Motor neuron (in vitro differentiated cells): ENCODE measurements at regions of chr5 and their contacts with region 1.

Region 1: DNA sequence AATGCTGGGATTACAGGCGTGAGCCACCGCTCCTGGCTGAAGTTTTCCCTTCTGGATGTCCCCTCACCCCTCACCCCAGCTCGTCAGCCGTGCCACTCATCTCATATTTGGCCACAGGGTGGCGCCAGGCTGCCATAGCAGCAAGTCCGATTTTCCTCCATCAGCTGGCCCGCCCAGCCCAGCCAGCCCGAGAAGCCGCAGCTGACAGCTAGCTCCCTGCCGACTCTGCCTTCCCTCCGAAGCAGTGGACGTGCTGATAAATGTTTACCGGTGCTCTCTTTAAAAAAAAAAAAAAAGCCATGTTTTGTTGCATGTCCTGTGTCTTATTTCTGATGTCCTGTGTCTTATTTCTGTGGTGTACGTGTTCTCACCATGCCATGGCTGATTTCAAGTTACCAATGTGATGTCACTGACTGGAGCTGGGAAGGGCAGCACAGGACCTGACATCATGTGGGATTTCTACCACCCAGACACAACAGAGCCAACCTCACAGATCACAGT is 58.3 kb downstream of the PFDN1 start:
- ATAC-seq: peak; percentile 18 to 66 (median 40)
- H3K4me3 ChIP-seq: no peak overlapping the region
- H3K27ac ChIP-seq: no peak overlapping the region
- H3K4me1 ChIP-seq: peaks cover 12 to 20% of the 10 kb centered on the region in 2 donors

Region 2: DNA sequence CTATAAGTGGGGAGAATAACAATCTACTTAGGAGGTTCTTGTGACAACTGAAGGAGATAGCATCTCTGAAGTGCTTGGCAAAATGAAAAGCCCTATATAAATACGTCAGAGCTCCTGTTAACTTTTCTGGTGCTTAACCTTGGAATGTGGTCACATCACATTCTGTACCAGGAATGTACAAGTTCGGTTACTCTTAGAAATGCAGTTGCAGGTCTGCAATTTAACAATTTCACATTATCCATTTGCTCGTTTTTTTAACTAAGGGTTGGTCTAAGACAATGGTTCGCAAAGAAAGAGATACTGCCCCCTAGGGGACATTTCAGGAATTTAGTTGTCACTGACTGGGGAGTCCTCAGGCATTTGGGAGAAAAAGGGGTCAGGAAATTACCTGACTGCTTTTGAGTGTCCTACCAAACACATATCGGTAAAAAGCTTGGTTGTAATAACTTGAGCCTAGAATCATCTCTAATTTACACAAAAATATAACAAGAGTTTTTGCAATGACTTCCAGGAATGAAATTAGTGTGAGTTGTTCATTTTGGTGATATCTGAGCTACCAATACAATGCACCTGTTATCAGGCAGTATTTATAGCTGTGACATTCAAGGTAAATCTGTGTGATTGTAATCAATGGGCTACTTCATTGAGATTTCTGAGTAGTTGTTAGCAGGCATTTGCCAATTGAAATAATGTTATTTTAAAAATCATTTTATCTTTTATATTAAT is 107.2 kb after region 1 on chr5:
- in situ Hi-C with region 1: loop called in 6 of 9 experiments (anchors 5 to 25 kb)
- ATAC-seq: peak; percentile 56 to 92 (median 68)
- H3K4me3 ChIP-seq: no peak overlapping the region
- H3K27ac ChIP-seq: no peak overlapping the region
- H3K4me1 ChIP-seq: peaks cover 0 to 2% of the 10 kb centered on the region in 2 donors

Region 3: GRCh38 chr5:140357726-140358093 is 113.1 kb after region 1 on chr5:
- in situ Hi-C with region 1: loop called in 6 of 9 experiments (anchors 5 to 25 kb)
- ATAC-seq: peak; percentile 93 to 99 (median 97)
- H3K4me3 ChIP-seq: peak overlapping the region in 1 of 5 donors; percentile 7
- H3K27ac ChIP-seq: no peak overlapping the region
- H3K4me1 ChIP-seq: peaks cover 0 to 3% of the 10 kb centered on the region in 2 donors